ENCODE measurements at regions of chr17 and their contacts with region 1.

Region 1: GRCh38 chr17:27879987-27880608 is 13.1 kb downstream of the LYRM9 start:
- DNase-seq: peak; percentile 70 to 90
- ATAC-seq: peak; percentile 94 to 98
- H3K4me3 ChIP-seq: no peak overlapping the region
- H3K27ac ChIP-seq: no peak overlapping the region
- H3K4me1 ChIP-seq: no peaks in the 10 kb centered on the region
- CTCF ChIP-seq: peak; percentile 97
- EP300 ChIP-seq: no peak
- POLR2A ChIP-seq: no peak
- RAD21 ChIP-seq: peak; percentile 97 to 98

Region 2: GRCh38 chr17:27778193-27778592 is 101.9 kb before region 1 on chr17:
- CTCF ChIA-PET with region 1: interaction called, 59 read pairs
- POLR2A ChIA-PET with region 1: no interaction called
- DNase-seq: no peak
- ATAC-seq: no peak; a peak in 1 of 6 replicates
- H3K4me3 ChIP-seq: no peak overlapping the region
- H3K27ac ChIP-seq: peak overlapping the region; percentile 48 to 59
- H3K4me1 ChIP-seq: peaks cover 12% of the 10 kb centered on the region
- CTCF ChIP-seq: no peak
- EP300 ChIP-seq: no peak
- POLR2A ChIP-seq: no peak
- RAD21 ChIP-seq: no peak

Region 3: DNA sequence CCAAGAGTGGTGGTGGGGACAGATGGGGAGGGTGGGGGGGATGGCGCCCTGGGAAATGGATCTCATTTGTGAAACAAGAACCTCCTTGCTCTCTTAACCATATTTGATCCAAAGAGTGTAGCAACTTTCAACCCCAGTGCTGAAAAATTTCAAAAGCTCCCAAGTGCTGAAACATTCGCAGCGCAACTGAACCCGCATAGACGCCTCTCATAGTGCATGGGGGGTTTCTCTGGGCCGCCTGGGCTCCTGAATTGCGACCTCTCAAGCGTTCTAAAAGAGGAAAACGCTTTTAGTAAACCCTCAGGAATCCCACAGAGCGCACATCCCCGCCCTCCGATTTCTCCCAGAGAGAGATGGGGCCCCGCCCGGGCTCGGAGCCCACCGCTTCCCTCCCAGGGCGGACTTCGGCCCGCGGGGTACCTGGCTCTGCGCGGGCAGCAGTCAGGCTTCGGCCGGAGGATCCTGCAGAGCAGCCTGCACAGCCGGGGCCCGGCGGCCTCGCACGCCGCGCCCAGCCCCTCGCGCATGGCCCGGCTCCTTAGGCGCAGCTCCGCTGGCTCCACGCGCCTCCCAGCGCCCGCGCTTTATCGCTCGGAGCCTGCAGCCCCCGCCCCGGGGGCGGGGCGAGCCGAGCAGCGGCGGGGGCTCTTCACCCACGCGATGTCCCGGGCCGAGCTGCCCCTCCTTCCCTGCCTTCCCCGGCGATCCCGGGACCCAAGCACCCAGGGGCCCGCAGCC is 86.8 kb before region 1 on chr17:
- CTCF ChIA-PET with region 1: interaction called, 474 read pairs
- POLR2A ChIA-PET with region 1: no interaction called
- DNase-seq: peak in 1 of 2 experiments; percentile 37
- ATAC-seq: peak; percentile 69 to 85
- H3K4me3 ChIP-seq: peak overlapping the region; percentile 53
- H3K27ac ChIP-seq: peak overlapping the region; percentile 32 to 73; a peak in 5 of 6 replicates
- H3K4me1 ChIP-seq: peaks cover 10% of the 10 kb centered on the region; the same call in 2 of the 3 replicates
- CTCF ChIP-seq: no peak
- EP300 ChIP-seq: no peak
- POLR2A ChIP-seq: peak; percentile 31; the same call in 1 of the 2 replicates
- RAD21 ChIP-seq: no peak

Region 4: GRCh38 chr17:27834571-27834970 is 45.5 kb before region 1 on chr17:
- CTCF ChIA-PET with region 1: interaction called, 10 read pairs
- POLR2A ChIA-PET with region 1: no interaction called
- DNase-seq: no peak
- ATAC-seq: no peak
- H3K4me3 ChIP-seq: no peak overlapping the region
- H3K27ac ChIP-seq: no peak overlapping the region
- H3K4me1 ChIP-seq: no peaks in the 10 kb centered on the region
- CTCF ChIP-seq: no peak
- EP300 ChIP-seq: no peak
- POLR2A ChIP-seq: no peak
- RAD21 ChIP-seq: no peak

Region 5: DNA sequence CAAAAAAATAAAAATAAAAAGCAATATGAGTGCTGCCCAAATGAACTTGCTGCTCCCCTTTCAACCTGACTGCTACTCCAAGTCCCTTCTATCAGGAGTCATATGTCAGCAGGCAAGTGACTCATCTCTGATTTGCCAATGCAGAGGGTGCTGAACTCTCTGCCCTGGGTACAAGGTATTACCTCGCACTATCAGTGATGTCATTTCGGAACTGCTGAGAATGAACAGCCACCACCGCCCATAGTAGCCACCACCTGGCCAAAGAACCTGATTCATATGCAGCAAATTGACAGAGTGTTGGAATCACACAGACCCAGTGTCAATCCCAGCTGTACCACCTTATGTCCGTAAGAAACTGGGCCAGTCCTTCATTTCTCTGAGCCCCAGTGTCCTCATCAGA is 18.1 kb before region 1 on chr17:
- CTCF ChIA-PET with region 1: interaction called, 62 read pairs
- POLR2A ChIA-PET with region 1: no interaction called
- DNase-seq: peak in 1 of 2 experiments; percentile 19
- ATAC-seq: peak in 1 of 2 experiments; percentile 57; a peak in 1 of 6 replicates
- H3K4me3 ChIP-seq: no peak overlapping the region
- H3K27ac ChIP-seq: no peak overlapping the region
- H3K4me1 ChIP-seq: no peaks in the 10 kb centered on the region
- CTCF ChIP-seq: no peak
- EP300 ChIP-seq: no peak
- POLR2A ChIP-seq: no peak
- RAD21 ChIP-seq: no peak

Region 6: GRCh38 chr17:27892866-27893769 is 13.0 kb after region 1 on chr17 and contains the start of gene LYRM9:
- CTCF ChIA-PET with region 1: interaction called, 144 read pairs
- POLR2A ChIA-PET with region 1: interaction called, 9 read pairs
- DNase-seq: peak; percentile 78 to 90
- ATAC-seq: peak; percentile 95 to 99
- H3K4me3 ChIP-seq: peak within 1 kb of the TSS; percentile 48
- H3K27ac ChIP-seq: peak within 1 kb of the TSS; percentile 78 to 94
- H3K4me1 ChIP-seq: peaks cover 20% of the 10 kb centered on the region; the same call in 1 of the 3 replicates
- CTCF ChIP-seq: peak; percentile 99
- EP300 ChIP-seq: no peak
- POLR2A ChIP-seq: peak; percentile 89
- RAD21 ChIP-seq: peak; percentile 31 to 62; a peak in 3 of 5 replicates
- polyA plus RNA-seq, gene LYRM9: 2.5 and 2.7 TPM in 2 replicates